ENCODE measurements at regions of chr4 and their contacts with region 1.

Region 1: DNA sequence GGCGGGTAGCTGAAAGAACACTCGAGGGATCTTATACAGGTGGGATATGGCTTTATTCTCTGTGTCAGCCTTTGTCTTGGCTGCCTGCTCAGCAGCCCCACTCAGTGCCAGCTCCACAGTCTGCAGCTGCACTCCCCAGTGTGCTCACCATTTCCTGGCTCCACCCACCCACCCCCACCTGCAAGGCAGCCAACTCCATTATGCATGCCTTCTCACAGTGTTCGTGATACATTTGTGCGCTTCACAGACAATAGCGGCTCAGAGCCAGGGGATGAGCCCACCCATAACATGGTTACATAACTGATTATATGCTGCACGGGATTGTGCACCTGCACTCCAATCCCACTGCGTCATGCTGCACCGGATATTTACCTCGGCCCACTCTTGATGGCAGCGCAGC is 8.8 kb upstream of the TMEM128 start:
- DNase-seq: peak; percentile 43
- ATAC-seq: peak in 1 of 2 donors; percentile 53

Region 2: DNA sequence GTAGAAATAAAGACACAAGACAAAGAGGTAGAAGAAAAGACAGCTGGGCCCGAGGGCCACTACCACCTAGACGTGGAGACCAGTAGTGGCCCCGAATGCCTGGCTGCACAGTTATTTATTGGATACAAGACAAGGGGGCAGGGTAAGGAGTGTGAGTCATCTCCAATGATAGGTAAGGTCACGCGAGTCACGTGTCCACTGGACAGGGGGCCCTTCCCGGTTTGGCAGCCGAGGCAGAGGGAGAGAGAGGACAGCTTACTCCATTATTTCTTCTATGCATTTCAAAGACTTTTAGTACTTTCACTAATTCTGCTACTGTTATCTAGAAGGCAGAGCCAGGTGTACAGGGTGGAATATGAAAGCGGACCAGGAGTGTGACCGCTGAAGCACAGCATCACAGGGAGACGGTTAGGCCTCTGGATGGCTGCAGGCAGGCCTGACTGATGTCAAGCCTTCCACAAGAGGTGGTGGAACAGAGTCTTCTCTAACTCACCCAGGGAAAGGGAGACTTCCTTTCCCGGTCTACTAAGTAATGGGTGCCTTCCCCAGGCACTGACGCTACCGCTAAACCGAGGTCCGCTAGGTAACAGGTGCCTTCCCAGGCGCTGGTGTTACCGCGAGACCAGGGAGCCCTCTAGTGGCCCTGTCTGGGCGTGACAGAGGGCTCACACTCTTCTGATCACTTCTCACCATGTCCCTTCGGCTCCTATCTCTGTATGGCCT is 78.2 kb after region 1 on chr4:
- intact Hi-C with region 1: loop called (anchors 2 to 5 kb)
- DNase-seq: peak; percentile 80
- ATAC-seq: peak; percentile 28 to 36

Region 3: GRCh38 chr4:4430492-4431197 is 173.8 kb after region 1 on chr4:
- intact Hi-C with region 1: loop called in 1 of 2 experiments (anchors 5 kb)
- DNase-seq: peak; percentile 50
- ATAC-seq: peak; percentile 38 to 70